A673 (cell line): ENCODE measurements at regions of chr2 and their contacts with region 1.

Region 1: DNA sequence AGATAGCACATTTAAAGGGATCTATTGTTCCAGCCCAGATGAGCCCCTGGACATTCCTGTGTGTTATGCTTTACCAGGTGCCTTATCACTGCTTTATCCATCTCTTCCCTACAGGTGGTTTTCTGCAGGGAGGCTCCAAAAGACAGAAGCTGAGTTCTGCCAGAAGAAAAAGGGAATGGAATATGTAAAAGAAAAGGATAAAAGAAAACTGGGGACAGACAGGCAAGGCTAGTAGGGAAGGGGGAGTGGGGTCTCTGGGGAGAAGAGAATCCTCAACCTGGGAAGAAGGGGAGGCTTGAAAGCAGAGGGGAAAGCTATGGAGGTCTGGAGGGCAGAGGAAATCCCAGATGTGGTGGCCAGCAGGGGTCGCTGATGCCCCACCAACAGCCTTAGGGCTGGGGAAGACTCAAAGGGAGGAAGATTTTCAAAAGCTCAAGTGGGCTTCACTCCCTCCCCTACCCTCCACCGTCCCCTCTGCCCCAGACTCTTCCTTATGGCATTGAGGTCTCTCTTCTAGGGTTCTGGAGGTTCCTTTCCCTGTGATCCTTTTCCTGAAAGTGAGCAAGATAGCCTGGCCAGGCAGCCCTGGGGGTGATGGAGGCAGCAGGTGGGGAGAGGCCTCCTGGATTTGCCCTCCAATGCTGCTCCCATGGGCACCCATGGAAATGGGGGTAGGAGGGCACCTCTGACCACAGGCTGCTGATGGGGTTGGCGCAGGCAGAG is 178.1 kb upstream of the PKDCC start:
- DNase-seq: peak; percentile 83
- H3K4me3 ChIP-seq: no peak overlapping the region
- H3K27ac ChIP-seq: peak overlapping the region; percentile 43
- H3K4me1 ChIP-seq: peaks cover 39% of the 10 kb centered on the region
- H3K27me3 ChIP-seq: no peaks in the 10 kb centered on the region
- CTCF ChIP-seq: peak; percentile 85

Region 2: DNA sequence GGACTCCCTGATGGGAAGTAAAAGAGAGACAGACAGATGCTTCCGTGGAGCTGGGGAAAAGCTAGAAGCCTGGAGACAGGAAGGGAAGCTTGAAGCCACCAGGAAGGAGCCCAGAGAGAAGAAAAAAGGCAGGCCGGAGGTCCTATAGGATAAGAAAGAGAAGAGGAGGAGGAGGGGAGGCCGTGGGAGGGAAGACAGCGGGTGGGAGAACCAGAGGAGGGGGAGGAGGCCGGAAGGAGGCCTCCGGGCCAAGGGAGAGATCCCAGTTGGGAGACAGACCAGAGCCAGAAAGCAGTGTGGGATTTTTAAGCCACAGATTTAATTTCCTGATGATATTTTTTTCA is 71.0 kb after region 1 on chr2:
- CTCF ChIA-PET with region 1: interaction called, 9 read pairs
- POLR2A ChIA-PET with region 1: no interaction called
- intact Hi-C with region 1: loop called (anchors 5 kb)
- DNase-seq: peak; percentile 96
- H3K4me3 ChIP-seq: no peak overlapping the region
- H3K27ac ChIP-seq: peak overlapping the region; percentile 74
- H3K4me1 ChIP-seq: peaks cover 69% of the 10 kb centered on the region
- H3K27me3 ChIP-seq: no peaks in the 10 kb centered on the region
- CTCF ChIP-seq: no peak

Region 3: GRCh38 chr2:42047488-42048298 is 178.0 kb after region 1 on chr2 and contains the start of gene PKDCC:
- CTCF ChIA-PET with region 1: interaction called, 12 read pairs
- POLR2A ChIA-PET with region 1: no interaction called
- intact Hi-C with region 1: no loop called
- DNase-seq: peak; percentile 85
- H3K4me3 ChIP-seq: peak within 1 kb of the TSS; percentile 84
- H3K27ac ChIP-seq: peak within 1 kb of the TSS; percentile 95
- H3K4me1 ChIP-seq: peaks cover 34% of the 10 kb centered on the region
- H3K27me3 ChIP-seq: no peaks in the 10 kb centered on the region
- CTCF ChIP-seq: no peak
- total RNA-seq, gene PKDCC: 77.5 and 82.2 TPM in 2 replicates

Region 4: GRCh38 chr2:42086500-42086953 is 216.8 kb after region 1 on chr2:
- CTCF ChIA-PET with region 1: interaction called, 84 read pairs
- POLR2A ChIA-PET with region 1: interaction called, 3 read pairs
- intact Hi-C with region 1: loop called (anchors 1 kb)
- DNase-seq: peak; percentile 83
- H3K4me3 ChIP-seq: no peak overlapping the region
- H3K27ac ChIP-seq: no peak overlapping the region
- H3K4me1 ChIP-seq: no peaks in the 10 kb centered on the region
- H3K27me3 ChIP-seq: no peaks in the 10 kb centered on the region
- CTCF ChIP-seq: peak; percentile 79